Activated T-helper 1 cell treated with anti-CD3 and anti-CD28 coated beads, Interleukin-12 subunit alpha, Interleukin-12 subunit beta, Interleukin-2, Interleukin-4 antibody, amounts not matched to agents 30 ng/mL and 10 ng/mL and 1 ng/mL, durations not matched to agents 14 hours and 24 hours and 36 hours (primary cell): ENCODE measurements at regions of chrX and their contacts with region 1.

Region 1: GRCh38 chrX:68579810-68580209 is 67.7 kb upstream of the STARD8 start:
- DNase-seq: no peak
- H3K4me3 Mint-ChIP-seq: no peak overlapping the region
- H3K27ac Mint-ChIP-seq: no peak overlapping the region
- H3K4me1 Mint-ChIP-seq: no peaks in the 10 kb centered on the region
- H3K27me3 Mint-ChIP-seq: no peaks in the 10 kb centered on the region

Region 2: GRCh38 chrX:68599251-68600152 is 19.7 kb after region 1 on chrX:
- intact Hi-C with region 1: loop called (anchors 2 kb)
- DNase-seq: no peak
- H3K4me3 Mint-ChIP-seq: no peak overlapping the region
- H3K27ac Mint-ChIP-seq: no peak overlapping the region
- H3K4me1 Mint-ChIP-seq: no peaks in the 10 kb centered on the region
- H3K27me3 Mint-ChIP-seq: peaks cover 2% of the 10 kb centered on the region